ENCODE measurements at regions of chr17 and their contacts with region 1.

Region 1: DNA sequence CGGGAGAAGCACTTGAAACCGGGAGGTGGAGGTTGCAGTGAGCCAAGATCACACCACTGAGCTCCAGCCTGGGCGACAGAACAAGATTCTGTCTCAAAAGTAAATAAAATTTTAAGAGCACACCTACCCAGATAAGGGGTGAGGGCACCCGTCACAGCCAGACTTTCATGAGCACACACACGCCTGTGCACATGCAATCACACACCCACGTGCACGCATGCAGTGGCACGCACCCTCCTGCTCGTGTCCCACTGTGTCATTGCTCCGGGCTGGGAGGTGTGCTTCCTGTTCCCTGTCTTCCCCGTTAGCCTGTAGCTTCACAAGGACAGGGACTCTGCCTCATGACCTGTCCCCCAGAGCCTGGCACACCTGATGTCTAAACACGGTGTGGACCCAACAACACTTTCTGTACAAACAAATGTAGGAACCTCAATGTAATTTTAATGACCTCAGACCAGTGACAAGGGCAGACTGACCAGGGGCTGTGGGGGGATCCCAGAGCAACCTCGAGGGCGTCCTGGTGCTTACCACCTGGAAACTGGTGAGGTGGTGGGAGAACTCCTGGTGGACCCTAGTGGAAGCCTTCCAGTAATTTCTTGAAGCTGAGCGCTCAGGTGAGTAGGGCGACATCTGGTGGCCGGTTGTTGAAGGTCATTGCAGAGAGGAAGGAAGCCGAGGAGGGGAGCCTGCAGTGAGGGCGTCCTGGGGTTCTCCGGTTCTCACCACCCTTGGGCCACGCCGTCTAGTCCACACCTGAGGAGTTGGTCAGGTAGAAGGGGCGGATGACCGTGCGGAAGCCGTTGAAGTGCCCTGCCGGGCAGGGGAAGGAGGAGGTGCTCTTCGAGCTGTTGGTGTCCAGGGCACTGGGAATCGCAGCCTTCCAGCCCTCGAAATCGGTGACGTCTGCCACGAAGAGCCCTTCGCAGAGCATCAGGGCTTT is 8.6 kb downstream of the LGALS3BP start:
- DNase-seq: peak; percentile 93
- H3K4me3 ChIP-seq: peak overlapping the region in 1 of 2 experiments; percentile 9; a peak in 1 of 4 replicates
- H3K27ac ChIP-seq: peak overlapping the region; percentile 9 to 65; a peak in 3 of 4 replicates
- H3K4me1 ChIP-seq: peaks cover 0 to 29% of the 10 kb centered on the region in 2 experiments; a peak in 1 of 4 replicates
- H3K27me3 ChIP-seq: no peaks in the 10 kb centered on the region
- CTCF ChIP-seq: peak; percentile 97
- EP300 ChIP-seq: no peak
- RAD21 ChIP-seq: peak; percentile 96

Region 2: DNA sequence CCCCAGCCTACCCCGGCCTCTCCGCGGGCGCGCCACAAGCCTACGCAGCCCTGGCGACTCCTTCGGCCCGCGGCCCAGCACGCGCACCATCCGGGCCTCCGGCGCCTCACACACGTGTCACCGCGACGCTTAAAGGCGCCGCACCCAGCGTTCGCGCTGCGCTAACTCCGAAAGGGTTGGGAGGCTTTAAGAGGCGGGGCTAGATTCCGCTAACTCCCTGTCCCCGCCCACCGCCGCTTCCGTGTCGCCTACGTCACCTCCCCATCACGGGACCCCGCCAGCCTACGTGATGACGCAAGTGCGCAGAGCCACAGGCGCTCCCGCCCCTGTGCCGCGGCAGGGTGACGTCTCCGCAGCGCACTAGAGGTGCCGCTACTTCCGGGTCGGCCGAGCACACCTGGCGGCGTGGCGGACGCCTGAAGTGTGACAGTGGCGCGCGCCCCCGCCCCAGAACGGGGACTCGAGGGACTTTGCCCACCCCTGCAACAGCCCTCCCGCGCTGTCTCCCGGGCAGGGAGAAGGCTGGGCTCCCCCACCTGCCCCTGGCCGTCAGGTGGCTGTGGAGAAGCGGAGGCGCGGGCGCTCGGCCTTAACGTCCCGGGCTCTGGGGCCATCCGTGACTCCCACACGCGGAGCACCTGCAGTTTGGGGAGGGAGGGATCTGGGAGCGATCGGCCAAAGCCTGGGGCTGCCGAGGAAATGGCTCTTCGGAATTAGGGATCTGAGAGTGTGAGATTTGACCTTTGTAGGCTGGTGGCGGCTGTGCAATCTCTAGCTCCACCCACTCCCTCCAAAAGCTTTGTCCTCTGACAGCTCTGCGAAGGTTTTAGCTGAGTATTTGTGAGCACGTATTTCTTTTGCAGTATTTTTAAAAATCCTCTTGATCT is 130.1 kb before region 1 on chr17 and contains the start of gene USP36:
- CTCF ChIA-PET with region 1: interaction called, 25 read pairs
- POLR2A ChIA-PET with region 1: no interaction called
- DNase-seq: peak; percentile 100
- H3K4me3 ChIP-seq: peak within 1 kb of the TSS; percentile 75 to 84
- H3K27ac ChIP-seq: peak within 1 kb of the TSS; percentile 79 to 90
- H3K4me1 ChIP-seq: peaks cover 14 to 27% of the 10 kb centered on the region in 2 experiments; a peak in 3 of 4 replicates
- H3K27me3 ChIP-seq: no peaks in the 10 kb centered on the region
- CTCF ChIP-seq: no peak
- EP300 ChIP-seq: no peak; a peak in 1 of 4 replicates
- RAD21 ChIP-seq: no peak
- polyA plus RNA-seq, gene USP36: 34.6 and 41.2 TPM in 2 replicates

Region 3: GRCh38 chr17:78883164-78884122 is 87.7 kb before region 1 on chr17:
- CTCF ChIA-PET with region 1: interaction called, 68 read pairs
- POLR2A ChIA-PET with region 1: interaction called, 8 read pairs
- DNase-seq: peak; percentile 93
- H3K4me3 ChIP-seq: peak overlapping the region; percentile 34 to 58
- H3K27ac ChIP-seq: peak overlapping the region; percentile 99 to 100
- H3K4me1 ChIP-seq: peaks cover 32 to 74% of the 10 kb centered on the region in 2 experiments
- H3K27me3 ChIP-seq: no peaks in the 10 kb centered on the region
- CTCF ChIP-seq: 0 out of 2 replicates have a peak, but pooled peaks have one; percentile 11
- EP300 ChIP-seq: peak in 1 of 2 experiments; percentile 88; a peak in 3 of 4 replicates
- RAD21 ChIP-seq: no peak; the same call in none of the 2 replicates

Region 4: DNA sequence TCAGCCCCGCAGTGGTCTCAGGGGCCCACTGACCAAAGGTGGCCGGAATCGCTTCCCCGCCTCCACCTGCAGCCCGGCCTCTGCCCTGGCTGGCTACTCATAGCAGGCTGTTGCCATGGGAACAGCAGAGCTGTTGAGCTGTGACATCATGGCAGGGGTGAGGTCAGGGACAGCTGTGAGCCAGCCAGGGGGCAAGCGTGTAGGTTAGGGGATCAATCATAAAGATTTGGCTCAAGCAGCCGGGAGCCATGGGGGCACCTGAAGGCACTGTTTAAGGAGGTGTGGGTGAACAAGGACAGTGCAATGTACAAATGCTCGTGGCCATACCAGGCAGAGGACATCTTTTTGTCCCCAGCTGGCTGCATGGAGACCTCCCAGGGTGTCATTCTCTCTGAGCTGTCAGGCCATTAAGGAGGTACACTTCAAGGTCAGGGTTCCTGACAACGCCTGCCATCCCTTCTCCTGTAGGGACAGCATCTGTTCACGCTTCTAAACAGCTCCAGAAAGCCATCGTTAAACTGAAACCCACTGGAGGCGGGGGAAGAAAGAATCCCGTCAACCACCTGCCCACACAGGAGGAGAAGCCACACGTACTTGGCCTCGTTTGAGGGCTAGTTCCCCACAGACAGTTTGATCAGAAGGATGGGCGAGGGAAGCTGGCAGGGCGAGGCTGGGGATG is 67.9 kb before region 1 on chr17 and contains the start of gene CEP295NL:
- CTCF ChIA-PET with region 1: interaction called, 18 read pairs
- POLR2A ChIA-PET with region 1: no interaction called
- DNase-seq: peak; percentile 78
- H3K4me3 ChIP-seq: no peak within 1 kb of the TSS
- H3K27ac ChIP-seq: no peak within 1 kb of the TSS; a peak in 1 of 4 replicates
- H3K4me1 ChIP-seq: peaks cover 0 to 21% of the 10 kb centered on the region in 2 experiments; a peak in 1 of 4 replicates
- H3K27me3 ChIP-seq: no peaks in the 10 kb centered on the region
- CTCF ChIP-seq: no peak
- EP300 ChIP-seq: no peak
- RAD21 ChIP-seq: no peak
- polyA plus RNA-seq, gene CEP295NL: 0.31 and 0.35 TPM in 2 replicates

Region 5: GRCh38 chr17:78925234-78925633 is 45.9 kb before region 1 on chr17 and contains the start of gene TIMP2:
- CTCF ChIA-PET with region 1: interaction called, 24 read pairs
- POLR2A ChIA-PET with region 1: no interaction called
- DNase-seq: peak; percentile 100
- H3K4me3 ChIP-seq: peak within 1 kb of the TSS; percentile 74 to 84
- H3K27ac ChIP-seq: peak within 1 kb of the TSS; percentile 74 to 93
- H3K4me1 ChIP-seq: peaks cover 18 to 46% of the 10 kb centered on the region in 2 experiments
- H3K27me3 ChIP-seq: no peaks in the 10 kb centered on the region
- CTCF ChIP-seq: no peak
- EP300 ChIP-seq: no peak
- RAD21 ChIP-seq: peak; percentile 14; the same call in 1 of the 2 replicates
- polyA plus RNA-seq, gene TIMP2: 256 and 441 TPM in 2 replicates

Region 6: GRCh38 chr17:78998311-78999055 is 27.4 kb after region 1 on chr17:
- CTCF ChIA-PET with region 1: interaction called, 133 read pairs
- POLR2A ChIA-PET with region 1: no interaction called
- DNase-seq: peak; percentile 96
- H3K4me3 ChIP-seq: no peak overlapping the region
- H3K27ac ChIP-seq: peak overlapping the region in 1 of 2 experiments; percentile 86; a peak in 2 of 4 replicates
- H3K4me1 ChIP-seq: peaks cover 0 to 30% of the 10 kb centered on the region in 2 experiments; a peak in 1 of 4 replicates
- H3K27me3 ChIP-seq: no peaks in the 10 kb centered on the region
- CTCF ChIP-seq: no peak
- EP300 ChIP-seq: peak in 1 of 2 experiments; percentile 7; a peak in 1 of 4 replicates
- RAD21 ChIP-seq: peak; percentile 4; the same call in 1 of the 2 replicates

Measured in SK-N-SH (cell line).